Activated CD4-positive, alpha-beta T cell treated with anti-CD3 and anti-CD28 coated beads for 36 hours (primary cell): ENCODE measurements at regions of chr3 and their contacts with region 1.

Region 1: GRCh38 chr3:33113772-33114621 is at the start of gene CRTAP:
- DNase-seq: peak; percentile 93
- ATAC-seq: peak; percentile 87
- H3K4me3 Mint-ChIP-seq: peak within 1 kb of the TSS; percentile 77
- H3K27ac Mint-ChIP-seq: peak within 1 kb of the TSS; percentile 73
- H3K4me1 Mint-ChIP-seq: peaks cover 47% of the 10 kb centered on the region
- H3K27me3 Mint-ChIP-seq: no peaks in the 10 kb centered on the region
- total RNA-seq, gene CRTAP: 39.2 to 43.4 TPM

Region 2: DNA sequence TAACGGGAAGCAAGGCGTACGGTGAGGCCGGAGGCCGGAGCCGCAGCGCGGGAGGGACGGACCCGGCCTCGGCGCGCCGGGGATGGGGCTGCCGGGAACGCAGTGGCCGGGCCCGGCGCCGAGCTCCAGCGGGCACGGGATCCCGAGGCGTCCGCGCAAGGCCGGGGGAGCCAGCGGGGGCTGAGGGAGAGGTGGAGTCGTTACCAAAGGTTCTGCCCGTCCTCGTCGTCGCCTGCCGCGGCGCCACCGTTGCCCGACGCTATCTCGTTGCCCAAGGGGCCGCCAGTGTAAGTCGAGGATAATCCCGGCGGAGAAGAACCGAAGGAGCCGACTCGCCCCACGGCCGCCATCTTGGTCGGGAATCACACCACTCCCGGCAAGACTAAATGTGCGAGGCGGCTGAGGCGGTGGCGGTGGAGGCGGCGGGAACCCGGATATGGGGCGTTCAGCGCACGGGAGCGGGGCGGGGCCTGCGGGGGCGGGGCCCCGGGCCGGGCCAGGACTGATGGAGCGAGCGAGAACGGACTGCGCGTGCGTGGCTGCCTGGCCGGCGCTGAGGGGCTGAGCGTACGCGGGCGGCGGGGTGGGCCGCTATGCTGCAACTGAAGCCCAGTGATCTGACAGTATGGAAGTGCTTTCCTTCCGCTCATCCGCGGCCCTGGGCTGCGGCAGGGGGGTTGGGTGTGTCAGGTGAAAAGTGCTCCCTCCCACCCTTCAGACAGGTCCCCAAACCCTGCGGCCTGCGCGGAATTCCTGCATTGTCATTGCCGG is 543.4 kb before region 1 on chr3 and contains the start of gene DYNC1LI1:
- CTCF ChIA-PET with region 1: no interaction called
- POLR2A ChIA-PET with region 1: interaction called, 6 read pairs
- intact Hi-C with region 1: loop called in 1 of 2 experiments (anchors 5 kb)
- DNase-seq: peak; percentile 96
- ATAC-seq: peak; percentile 96
- H3K4me3 Mint-ChIP-seq: peak within 1 kb of the TSS; percentile 78
- H3K27ac Mint-ChIP-seq: peak within 1 kb of the TSS; percentile 90
- H3K4me1 Mint-ChIP-seq: peaks cover 28% of the 10 kb centered on the region
- H3K27me3 Mint-ChIP-seq: no peaks in the 10 kb centered on the region
- total RNA-seq, gene DYNC1LI1: 31.8 to 31.9 TPM

Region 3: GRCh38 chr3:32842531-32842931 is 271.5 kb before region 1 on chr3:
- CTCF ChIA-PET with region 1: no interaction called
- POLR2A ChIA-PET with region 1: no interaction called
- intact Hi-C with region 1: no loop called
- DNase-seq: no peak
- ATAC-seq: no peak
- H3K4me3 Mint-ChIP-seq: no peak overlapping the region
- H3K27ac Mint-ChIP-seq: no peak overlapping the region
- H3K4me1 Mint-ChIP-seq: peaks cover 14% of the 10 kb centered on the region
- H3K27me3 Mint-ChIP-seq: no peaks in the 10 kb centered on the region

Region 4: GRCh38 chr3:32937331-32937730 is 176.7 kb before region 1 on chr3:
- CTCF ChIA-PET with region 1: no interaction called
- POLR2A ChIA-PET with region 1: no interaction called
- intact Hi-C with region 1: no loop called
- DNase-seq: no peak
- ATAC-seq: no peak
- H3K4me3 Mint-ChIP-seq: no peak overlapping the region
- H3K27ac Mint-ChIP-seq: no peak overlapping the region
- H3K4me1 Mint-ChIP-seq: no peaks in the 10 kb centered on the region
- H3K27me3 Mint-ChIP-seq: no peaks in the 10 kb centered on the region

Region 5: GRCh38 chr3:32998631-32999451 is 115.2 kb before region 1 on chr3:
- CTCF ChIA-PET with region 1: no interaction called
- POLR2A ChIA-PET with region 1: no interaction called
- intact Hi-C with region 1: loop called in 1 of 2 experiments (anchors 5 kb)
- DNase-seq: no peak
- ATAC-seq: peak; percentile 40
- H3K4me3 Mint-ChIP-seq: peak overlapping the region; percentile 46
- H3K27ac Mint-ChIP-seq: peak overlapping the region; percentile 91
- H3K4me1 Mint-ChIP-seq: peaks cover 83% of the 10 kb centered on the region
- H3K27me3 Mint-ChIP-seq: no peaks in the 10 kb centered on the region

Region 6: GRCh38 chr3:33063651-33064051 is 50.3 kb before region 1 on chr3:
- CTCF ChIA-PET with region 1: no interaction called
- POLR2A ChIA-PET with region 1: no interaction called
- intact Hi-C with region 1: loop called (anchors 1 to 5 kb)
- DNase-seq: peak; percentile 83
- ATAC-seq: peak; percentile 57
- H3K4me3 Mint-ChIP-seq: peak overlapping the region; percentile 34
- H3K27ac Mint-ChIP-seq: peak overlapping the region; percentile 97
- H3K4me1 Mint-ChIP-seq: peaks cover 70% of the 10 kb centered on the region
- H3K27me3 Mint-ChIP-seq: no peaks in the 10 kb centered on the region

Region 7: GRCh38 chr3:33131331-33132018 is 17.5 kb after region 1 on chr3:
- CTCF ChIA-PET with region 1: interaction called, 17 read pairs
- POLR2A ChIA-PET with region 1: interaction called, 3 read pairs
- intact Hi-C with region 1: no loop called
- DNase-seq: peak; percentile 54
- ATAC-seq: peak; percentile 63
- H3K4me3 Mint-ChIP-seq: no peak overlapping the region
- H3K27ac Mint-ChIP-seq: no peak overlapping the region
- H3K4me1 Mint-ChIP-seq: peaks cover 10% of the 10 kb centered on the region
- H3K27me3 Mint-ChIP-seq: no peaks in the 10 kb centered on the region